Activated naive CD4-positive, alpha-beta T cell treated with anti-CD3 and anti-CD28 coated beads, Interleukin-2, amount 10 ng/mL, durations not matched to agents 7 days and 5 days (primary cell): ENCODE measurements at regions of chr9 and their contacts with region 1.

Region 1: DNA sequence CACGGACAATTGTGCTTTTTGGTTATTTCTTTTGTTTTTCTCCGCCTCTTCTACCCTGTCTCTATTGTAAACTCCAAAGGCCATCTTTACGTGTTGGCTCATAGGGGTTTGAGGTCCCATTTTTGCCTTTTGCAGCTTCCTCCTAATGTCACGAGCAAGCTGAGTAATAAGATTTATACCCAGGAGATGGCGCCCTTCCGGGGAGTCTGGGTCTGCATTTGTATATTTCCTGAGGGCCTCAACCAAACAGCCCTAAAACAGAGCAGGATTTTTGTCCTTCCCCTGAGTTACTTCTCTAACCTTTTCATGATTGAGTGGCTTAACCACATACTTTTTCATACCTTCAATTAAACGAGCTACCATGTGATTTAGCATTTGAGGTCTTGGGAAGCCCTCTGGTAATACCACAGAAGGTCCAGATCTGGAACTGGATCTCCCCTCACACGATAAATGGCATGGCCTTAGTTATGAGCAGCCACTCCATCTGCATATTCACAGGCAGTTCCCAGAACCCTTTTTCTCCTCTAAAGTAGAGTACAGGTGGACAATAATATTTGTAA is 11.2 kb upstream of the CFAP95 start:
- DNase-seq: peak; percentile 51
- H3K4me3 Mint-ChIP-seq: no peak overlapping the region
- H3K27ac Mint-ChIP-seq: no peak overlapping the region
- H3K4me1 Mint-ChIP-seq: peaks cover 23% of the 10 kb centered on the region
- H3K27me3 Mint-ChIP-seq: peaks cover under 1% of the 10 kb centered on the region

Region 2: DNA sequence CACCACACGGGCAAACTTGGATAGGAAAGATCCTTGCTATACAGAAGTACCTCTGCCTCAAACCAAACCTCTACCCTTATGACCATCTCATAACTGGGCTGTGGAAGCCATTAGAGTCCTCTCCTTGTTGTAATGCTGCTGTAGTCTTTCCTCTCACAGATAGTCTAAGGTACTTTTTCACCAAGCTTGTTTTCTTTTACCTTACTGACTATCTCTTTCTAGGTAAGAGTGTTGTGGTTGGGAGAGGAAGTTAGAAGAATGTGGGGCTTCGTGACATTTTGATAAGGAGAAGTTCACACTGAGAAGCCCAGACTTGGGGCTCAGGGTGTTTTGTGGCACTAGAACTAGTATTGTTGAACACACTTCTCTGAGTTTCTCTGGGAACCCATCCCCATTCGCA is 20.1 kb after region 1 on chr9:
- CTCF ChIA-PET with region 1: interaction called, 11 read pairs
- DNase-seq: no peak
- H3K4me3 Mint-ChIP-seq: peak overlapping the region; percentile 2
- H3K27ac Mint-ChIP-seq: peak overlapping the region; percentile 82
- H3K4me1 Mint-ChIP-seq: peaks cover 55% of the 10 kb centered on the region
- H3K27me3 Mint-ChIP-seq: peaks cover 7% of the 10 kb centered on the region

Region 3: GRCh38 chr9:69877854-69878514 is 68.6 kb after region 1 on chr9:
- CTCF ChIA-PET with region 1: interaction called, 13 read pairs
- DNase-seq: no peak
- H3K4me3 Mint-ChIP-seq: no peak overlapping the region
- H3K27ac Mint-ChIP-seq: no peak overlapping the region
- H3K4me1 Mint-ChIP-seq: no peaks in the 10 kb centered on the region
- H3K27me3 Mint-ChIP-seq: peaks cover 10% of the 10 kb centered on the region

Region 4: GRCh38 chr9:69919461-69920061 is 110.2 kb after region 1 on chr9:
- CTCF ChIA-PET with region 1: interaction called, 13 read pairs
- DNase-seq: no peak
- H3K4me3 Mint-ChIP-seq: no peak overlapping the region
- H3K27ac Mint-ChIP-seq: no peak overlapping the region
- H3K4me1 Mint-ChIP-seq: no peaks in the 10 kb centered on the region
- H3K27me3 Mint-ChIP-seq: peaks cover 11% of the 10 kb centered on the region